Activated B cell treated with CpG ODN at 0.5 μM for 24 hours (primary cell): ENCODE measurements at regions of chr2 and their contacts with region 1.

Region 1: GRCh38 chr2:201158111-201158929 is 24.6 kb upstream of the CASP10 start:
- DNase-seq: peak; percentile 71
- ATAC-seq: peak; percentile 87
- H3K4me3 Mint-ChIP-seq: peak overlapping the region; percentile 73
- H3K27ac Mint-ChIP-seq: peak overlapping the region; percentile 95
- H3K4me1 Mint-ChIP-seq: peaks cover 56% of the 10 kb centered on the region
- H3K27me3 Mint-ChIP-seq: no peaks in the 10 kb centered on the region
- CTCF ChIP-seq: no peak

Region 2: GRCh38 chr2:201084863-201085262 is 73.5 kb before region 1 on chr2:
- CTCF ChIA-PET with region 1: no interaction called
- POLR2A ChIA-PET with region 1: interaction called, 4 read pairs
- intact Hi-C with region 1: loop called (anchors 2 kb)
- DNase-seq: no peak
- ATAC-seq: no peak
- H3K4me3 Mint-ChIP-seq: no peak overlapping the region
- H3K27ac Mint-ChIP-seq: no peak overlapping the region
- H3K4me1 Mint-ChIP-seq: no peaks in the 10 kb centered on the region
- H3K27me3 Mint-ChIP-seq: no peaks in the 10 kb centered on the region
- CTCF ChIP-seq: no peak

Region 3: GRCh38 chr2:201130524-201131186 is 27.7 kb before region 1 on chr2:
- CTCF ChIA-PET with region 1: interaction called, 6 read pairs
- POLR2A ChIA-PET with region 1: interaction called, 37 read pairs
- intact Hi-C with region 1: loop called (anchors 1 kb)
- DNase-seq: no peak
- ATAC-seq: no peak
- H3K4me3 Mint-ChIP-seq: peak overlapping the region; percentile 87
- H3K27ac Mint-ChIP-seq: peak overlapping the region; percentile 92
- H3K4me1 Mint-ChIP-seq: peaks cover 82% of the 10 kb centered on the region
- H3K27me3 Mint-ChIP-seq: no peaks in the 10 kb centered on the region
- CTCF ChIP-seq: no peak

Region 4: GRCh38 chr2:201171259-201171814 is 13.0 kb after region 1 on chr2:
- CTCF ChIA-PET with region 1: interaction called, 7 read pairs
- POLR2A ChIA-PET with region 1: interaction called, 10 read pairs
- intact Hi-C with region 1: loop called (anchors 1 kb)
- DNase-seq: no peak
- ATAC-seq: no peak
- H3K4me3 Mint-ChIP-seq: no peak overlapping the region
- H3K27ac Mint-ChIP-seq: no peak overlapping the region
- H3K4me1 Mint-ChIP-seq: peaks cover 32% of the 10 kb centered on the region
- H3K27me3 Mint-ChIP-seq: no peaks in the 10 kb centered on the region
- CTCF ChIP-seq: no peak

Region 5: GRCh38 chr2:201197781-201198180 is 39.5 kb after region 1 on chr2:
- CTCF ChIA-PET with region 1: no interaction called
- POLR2A ChIA-PET with region 1: no interaction called
- intact Hi-C with region 1: no loop called
- DNase-seq: no peak
- ATAC-seq: no peak
- H3K4me3 Mint-ChIP-seq: no peak overlapping the region
- H3K27ac Mint-ChIP-seq: no peak overlapping the region
- H3K4me1 Mint-ChIP-seq: peaks cover 43% of the 10 kb centered on the region
- H3K27me3 Mint-ChIP-seq: no peaks in the 10 kb centered on the region
- CTCF ChIP-seq: no peak

Region 6: DNA sequence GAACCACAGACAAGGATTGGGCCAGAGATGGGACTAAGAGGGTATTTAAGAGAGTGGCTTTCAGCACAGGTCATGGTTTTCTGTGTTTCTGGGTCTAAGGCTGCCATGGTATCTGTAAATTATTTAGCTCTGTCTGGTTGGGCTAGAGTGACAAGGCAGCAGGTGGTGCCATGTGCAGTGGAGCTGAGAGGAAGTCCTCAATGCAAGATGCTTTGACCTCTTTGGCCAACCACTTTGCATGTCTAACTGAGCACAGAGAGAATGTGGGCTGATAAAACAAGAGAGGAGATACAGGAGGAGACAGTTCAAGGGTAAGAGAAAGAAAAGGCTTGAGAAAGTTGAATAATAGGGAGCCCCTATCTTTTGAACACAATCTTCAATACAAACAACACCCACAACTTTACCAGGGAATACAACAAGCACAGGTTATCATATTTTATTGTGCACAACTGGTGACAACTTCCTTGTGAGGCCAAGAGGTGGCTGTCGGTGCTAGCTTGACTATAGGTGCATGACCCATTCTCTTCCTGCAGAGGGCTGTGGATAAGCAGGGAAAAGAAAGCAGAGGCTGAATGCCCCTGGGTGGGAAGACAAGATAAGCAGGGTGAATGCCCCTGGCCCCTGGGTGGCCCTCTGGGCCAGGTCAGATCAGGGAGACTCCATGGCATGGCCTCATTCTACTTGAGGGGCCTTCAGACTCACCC is 186.5 kb after region 1 on chr2:
- CTCF ChIA-PET with region 1: no interaction called
- POLR2A ChIA-PET with region 1: no interaction called
- intact Hi-C with region 1: no loop called
- DNase-seq: no peak
- ATAC-seq: peak; percentile 50
- H3K4me3 Mint-ChIP-seq: no peak overlapping the region
- H3K27ac Mint-ChIP-seq: peak overlapping the region; percentile 1
- H3K4me1 Mint-ChIP-seq: peaks cover 8% of the 10 kb centered on the region
- H3K27me3 Mint-ChIP-seq: no peaks in the 10 kb centered on the region
- CTCF ChIP-seq: no peak